ENCODE measurements at regions of chr10 and their contacts with region 1.

Region 1: GRCh38 chr10:14653271-14654228 is 121.1 kb downstream of the FAM107B start:
- DNase-seq: peak; percentile 74
- ATAC-seq: peak; percentile 59
- H3K4me3 ChIP-seq: no peak overlapping the region
- H3K27ac ChIP-seq: 0 out of 2 replicates have a peak overlapping the region, but pooled peaks have one; percentile 10
- H3K4me1 ChIP-seq: peaks cover 4% of the 10 kb centered on the region
- H3K27me3 ChIP-seq: peaks cover 6% of the 10 kb centered on the region
- CTCF ChIP-seq: no peak
- POLR2A ChIP-seq: no peak
- RAD21 ChIP-seq: no peak

Region 2: GRCh38 chr10:14617852-14618251 is 35.7 kb before region 1 on chr10:
- CTCF ChIA-PET with region 1: no interaction called
- POLR2A ChIA-PET with region 1: no interaction called
- dilution Hi-C with region 1: no loop called
- in situ Hi-C with region 1: no loop called
- intact Hi-C with region 1: loop called (anchors 5 kb)
- DNase-seq: peak; percentile 45
- ATAC-seq: peak; percentile 44
- H3K4me3 ChIP-seq: no peak overlapping the region
- H3K27ac ChIP-seq: no peak overlapping the region
- H3K4me1 ChIP-seq: peaks cover 6% of the 10 kb centered on the region; the same call in 1 of the 2 replicates
- H3K27me3 ChIP-seq: no peaks in the 10 kb centered on the region
- CTCF ChIP-seq: 0 out of 2 replicates have a peak, but pooled peaks have one; percentile 23
- POLR2A ChIP-seq: no peak
- RAD21 ChIP-seq: no peak

Region 3: GRCh38 chr10:14740684-14741247 is 87.2 kb after region 1 on chr10:
- CTCF ChIA-PET with region 1: no interaction called
- POLR2A ChIA-PET with region 1: no interaction called
- dilution Hi-C with region 1: no loop called
- in situ Hi-C with region 1: no loop called
- intact Hi-C with region 1: no loop called
- DNase-seq: peak; percentile 28
- ATAC-seq: no peak
- H3K4me3 ChIP-seq: no peak overlapping the region
- H3K27ac ChIP-seq: no peak overlapping the region
- H3K4me1 ChIP-seq: peaks cover 12% of the 10 kb centered on the region
- H3K27me3 ChIP-seq: no peaks in the 10 kb centered on the region
- CTCF ChIP-seq: no peak
- POLR2A ChIP-seq: no peak
- RAD21 ChIP-seq: no peak